Activated CD8-positive, alpha-beta memory T cell treated with anti-CD3 and anti-CD28 coated beads, Interleukin-2, amount 10 ng/mL, durations not matched to agents 7 days and 5 days (primary cell): ENCODE measurements at regions of chr4 and their contacts with region 1.

Region 1: GRCh38 chr4:742742-743311 is 37.2 kb downstream of the PCGF3 start:
- DNase-seq: peak; percentile 82
- ATAC-seq: peak; percentile 93
- H3K4me3 Mint-ChIP-seq: no peak overlapping the region
- H3K27ac Mint-ChIP-seq: no peak overlapping the region
- H3K4me1 Mint-ChIP-seq: no peaks in the 10 kb centered on the region
- H3K27me3 Mint-ChIP-seq: no peaks in the 10 kb centered on the region

Region 2: DNA sequence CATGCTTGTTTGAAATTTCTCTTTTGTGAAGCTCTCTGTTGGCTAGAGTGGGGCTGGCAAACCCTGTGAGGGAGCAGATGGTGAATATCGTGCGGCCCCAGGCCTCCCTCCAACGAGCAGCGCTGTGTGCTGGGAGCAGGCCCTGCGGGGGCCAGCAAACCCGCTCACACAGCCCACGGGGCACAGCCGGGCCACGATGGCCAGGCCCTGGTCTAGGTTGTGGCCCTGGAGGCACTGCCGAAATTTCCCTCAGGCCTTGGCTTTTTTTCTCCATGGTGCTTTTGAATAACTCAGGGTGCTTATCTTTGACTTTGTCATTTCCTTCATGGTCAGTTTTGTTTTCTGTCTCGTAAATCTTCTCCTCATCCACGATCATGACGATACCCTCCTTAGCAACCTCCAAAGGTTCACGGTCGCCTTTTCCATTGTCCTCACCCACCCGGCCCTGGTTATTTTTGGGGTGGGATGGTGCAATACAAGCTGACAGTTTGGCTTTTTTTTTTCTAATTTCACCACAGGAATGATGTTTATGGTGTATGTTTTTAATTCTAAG is 16.5 kb before region 1 on chr4:
- CTCF ChIA-PET with region 1: no interaction called
- DNase-seq: no peak
- ATAC-seq: no peak
- H3K4me3 Mint-ChIP-seq: no peak overlapping the region
- H3K27ac Mint-ChIP-seq: no peak overlapping the region
- H3K4me1 Mint-ChIP-seq: peaks cover 2% of the 10 kb centered on the region
- H3K27me3 Mint-ChIP-seq: no peaks in the 10 kb centered on the region

Region 3: DNA sequence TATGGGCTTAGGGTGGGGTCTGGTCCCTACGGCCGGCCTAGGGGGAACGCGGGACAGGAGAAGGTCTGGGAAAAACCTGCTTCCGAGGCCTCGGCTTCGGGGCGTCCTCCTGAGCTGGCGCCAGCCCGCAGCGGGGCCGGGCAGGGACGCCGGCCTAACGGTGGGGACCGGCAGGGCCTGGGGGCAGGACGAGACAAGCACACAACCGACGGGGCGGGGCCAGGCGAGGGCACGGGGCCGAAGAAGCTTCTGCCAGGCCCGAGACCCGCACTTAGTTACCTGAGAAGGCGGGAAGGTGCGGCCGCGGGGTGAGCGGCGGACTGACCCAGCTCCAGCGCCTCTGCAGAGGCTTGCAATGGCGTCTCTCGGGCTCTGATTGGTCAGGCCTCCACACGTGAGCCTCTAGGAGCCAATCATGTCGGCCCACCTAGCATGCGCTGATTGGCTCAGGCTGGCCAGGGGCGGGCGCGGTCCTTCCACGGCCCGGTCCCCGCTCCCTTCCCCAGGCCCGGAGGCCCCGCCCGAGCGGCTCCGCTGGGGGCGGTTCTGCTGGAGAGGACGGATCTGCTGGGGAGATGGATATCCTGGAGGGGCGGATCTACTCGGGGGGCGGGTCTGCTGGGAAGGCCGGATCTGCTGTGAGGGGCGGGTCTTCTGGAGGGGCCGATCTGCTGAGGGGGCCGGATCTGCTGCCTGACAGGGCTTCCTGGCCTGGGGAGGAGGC is 38.8 kb after region 1 on chr4:
- CTCF ChIA-PET with region 1: interaction called, 12 read pairs
- DNase-seq: peak; percentile 100
- ATAC-seq: peak; percentile 95
- H3K4me3 Mint-ChIP-seq: peak overlapping the region; percentile 79
- H3K27ac Mint-ChIP-seq: peak overlapping the region; percentile 82
- H3K4me1 Mint-ChIP-seq: peaks cover 48% of the 10 kb centered on the region
- H3K27me3 Mint-ChIP-seq: peaks cover 17% of the 10 kb centered on the region

Region 4: DNA sequence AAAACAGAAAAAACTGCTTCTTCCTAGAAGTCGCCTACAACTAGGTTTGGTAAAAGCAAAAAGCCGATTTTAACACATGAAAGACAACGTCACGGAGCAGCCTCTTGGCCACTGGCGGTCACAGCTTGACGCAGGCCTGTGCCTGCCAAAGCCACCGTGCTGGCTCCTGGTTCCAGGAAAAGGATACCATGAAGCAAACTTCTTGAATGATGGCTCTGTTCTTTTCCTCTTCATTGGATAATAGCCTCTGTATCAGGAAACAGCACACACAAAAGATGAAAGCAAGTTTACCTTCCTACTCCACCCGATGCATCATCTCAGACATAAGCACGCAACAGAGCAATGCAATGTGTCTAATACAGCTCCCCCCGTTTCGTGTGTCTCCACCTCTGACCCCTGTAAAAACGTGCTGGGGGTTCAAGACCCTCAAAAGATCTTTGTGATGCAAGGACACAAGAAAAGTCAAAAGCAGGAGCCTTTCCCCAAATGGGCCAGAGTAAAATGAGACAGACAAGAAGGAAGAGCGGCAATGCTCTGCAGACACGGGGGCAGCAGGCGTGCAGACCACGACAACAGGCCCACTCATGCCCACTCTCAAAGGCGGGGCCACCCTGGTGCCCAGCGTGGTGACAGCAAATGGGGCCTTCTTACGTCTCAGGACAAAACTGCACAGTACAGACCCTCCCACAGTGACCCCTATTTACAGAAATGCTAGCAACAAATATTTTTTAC is 169.9 kb after region 1 on chr4:
- CTCF ChIA-PET with region 1: no interaction called
- DNase-seq: no peak
- ATAC-seq: no peak
- H3K4me3 Mint-ChIP-seq: no peak overlapping the region
- H3K27ac Mint-ChIP-seq: no peak overlapping the region
- H3K4me1 Mint-ChIP-seq: peaks cover 23% of the 10 kb centered on the region
- H3K27me3 Mint-ChIP-seq: no peaks in the 10 kb centered on the region

Region 5: DNA sequence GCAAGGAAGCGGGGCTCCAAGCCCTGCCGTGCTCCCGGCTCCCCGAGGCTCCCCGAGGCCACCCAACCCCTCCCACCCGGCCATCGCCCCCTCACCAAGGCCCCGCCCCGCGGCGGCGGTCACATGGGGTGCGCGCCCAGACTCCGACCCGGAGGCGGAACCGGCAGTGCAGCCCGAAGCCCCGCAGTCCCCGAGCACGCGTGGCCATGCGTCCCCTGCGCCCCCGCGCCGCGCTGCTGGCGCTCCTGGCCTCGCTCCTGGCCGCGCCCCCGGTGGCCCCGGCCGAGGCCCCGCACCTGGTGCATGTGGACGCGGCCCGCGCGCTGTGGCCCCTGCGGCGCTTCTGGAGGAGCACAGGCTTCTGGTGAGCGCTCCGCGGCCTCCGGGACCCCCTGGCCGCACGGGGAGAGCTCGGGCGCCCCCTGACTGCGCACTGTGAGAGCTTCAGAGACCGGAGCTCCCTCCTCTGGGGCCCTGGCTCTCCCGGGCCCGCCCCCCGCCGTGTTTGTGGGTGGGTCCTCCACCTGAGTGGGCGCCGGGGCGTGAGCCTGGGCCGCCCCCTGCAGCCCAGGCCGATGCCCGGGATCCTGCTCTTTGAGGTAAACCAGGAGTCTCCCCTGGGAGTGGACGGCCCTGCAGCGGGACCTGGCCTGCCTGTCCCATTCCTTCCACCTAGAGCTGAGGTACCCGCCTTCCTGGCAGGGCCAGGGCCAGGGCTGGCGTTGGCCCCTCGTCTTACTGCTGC is 244.2 kb after region 1 on chr4 and contains the start of gene IDUA:
- CTCF ChIA-PET with region 1: interaction called, 34 read pairs
- DNase-seq: peak; percentile 91
- ATAC-seq: peak; percentile 90
- H3K4me3 Mint-ChIP-seq: peak within 1 kb of the TSS; percentile 86
- H3K27ac Mint-ChIP-seq: peak within 1 kb of the TSS; percentile 81
- H3K4me1 Mint-ChIP-seq: peaks cover 25% of the 10 kb centered on the region
- H3K27me3 Mint-ChIP-seq: no peaks in the 10 kb centered on the region
- total RNA-seq, gene IDUA: 27.1 to 28.1 TPM